ENCODE measurements at regions of chr21 and their contacts with region 1.

Region 1: GRCh38 chr21:45865106-45865832 is 116.3 kb upstream of the COL6A1 start:
- DNase-seq: peak; percentile 87
- H3K4me3 ChIP-seq: peak overlapping the region in 2 of 3 experiments; percentile 1 to 3
- H3K27ac ChIP-seq: no peak overlapping the region
- H3K4me1 ChIP-seq: peaks cover 22% of the 10 kb centered on the region
- H3K27me3 ChIP-seq: no peaks in the 10 kb centered on the region
- CTCF ChIP-seq: no peak

Region 2: GRCh38 chr21:45050786-45051489 is 814.3 kb before region 1 on chr21:
- CTCF ChIA-PET with region 1: no interaction called
- dilution Hi-C with region 1: no loop called
- in situ Hi-C with region 1: no loop called
- intact Hi-C with region 1: no loop called
- DNase-seq: no peak
- H3K4me3 ChIP-seq: no peak overlapping the region
- H3K27ac ChIP-seq: no peak overlapping the region
- H3K4me1 ChIP-seq: no peaks in the 10 kb centered on the region
- H3K27me3 ChIP-seq: peaks cover 8% of the 10 kb centered on the region
- CTCF ChIP-seq: no peak

Region 3: GRCh38 chr21:45854690-45855247 is 10.5 kb before region 1 on chr21:
- CTCF ChIA-PET with region 1: no interaction called
- dilution Hi-C with region 1: no loop called
- in situ Hi-C with region 1: no loop called
- intact Hi-C with region 1: loop called (anchors 1 kb)
- DNase-seq: no peak
- H3K4me3 ChIP-seq: no peak overlapping the region
- H3K27ac ChIP-seq: no peak overlapping the region
- H3K4me1 ChIP-seq: peaks cover 15% of the 10 kb centered on the region
- H3K27me3 ChIP-seq: no peaks in the 10 kb centered on the region
- CTCF ChIP-seq: no peak

Region 4: DNA sequence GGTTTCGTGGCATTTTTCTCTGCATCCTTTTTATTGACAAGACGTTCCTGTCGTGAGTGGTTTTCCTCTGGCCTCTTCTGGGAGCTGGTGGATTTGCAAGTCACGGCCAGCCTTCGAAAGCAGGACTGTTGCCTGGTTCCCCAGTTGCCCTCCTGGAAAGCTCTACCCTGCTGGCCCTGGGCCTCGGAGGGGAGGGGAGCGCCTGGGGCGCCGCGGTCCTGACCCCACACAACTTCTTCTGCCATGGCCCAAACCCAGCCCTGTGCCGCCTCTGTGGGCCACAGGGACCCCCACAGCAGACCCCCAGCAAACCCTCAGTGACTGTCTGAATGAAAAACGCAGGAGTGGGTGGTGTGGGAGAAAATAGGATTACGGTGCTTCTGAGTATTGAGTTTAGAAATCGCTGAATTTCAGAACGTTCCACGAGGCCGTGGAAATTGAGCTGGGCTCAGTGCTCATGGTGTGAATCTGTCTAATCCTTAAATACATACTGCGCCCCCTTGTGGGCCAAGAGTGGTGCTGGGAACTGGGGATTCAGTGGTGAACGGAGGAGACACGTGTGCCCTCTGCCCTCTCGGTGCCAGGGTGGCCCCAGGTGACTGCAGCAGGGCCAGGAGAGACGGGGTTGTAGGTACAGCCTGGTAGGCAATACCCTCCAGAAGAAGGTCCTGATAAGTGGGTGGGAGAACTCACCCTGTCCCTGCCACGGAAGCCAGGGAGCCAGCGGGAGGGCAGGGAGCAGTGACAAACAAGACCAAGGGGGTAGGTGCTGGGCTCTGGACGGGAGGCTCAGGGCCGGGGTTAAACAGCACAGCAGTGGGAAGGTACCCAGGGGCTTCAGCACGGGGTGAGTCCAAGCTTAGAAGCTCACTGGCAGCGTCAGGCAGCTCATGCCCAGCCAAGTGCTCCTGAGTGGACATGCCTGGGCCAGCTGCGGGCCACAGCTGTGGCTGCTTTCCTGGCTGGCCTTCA is 15.1 kb after region 1 on chr21:
- CTCF ChIA-PET with region 1: no interaction called
- dilution Hi-C with region 1: no loop called
- in situ Hi-C with region 1: no loop called
- intact Hi-C with region 1: loop called (anchors 2 kb)
- DNase-seq: peak; percentile 67
- H3K4me3 ChIP-seq: peak overlapping the region in 2 of 3 experiments; percentile 7 to 12
- H3K27ac ChIP-seq: peak overlapping the region; percentile 33
- H3K4me1 ChIP-seq: peaks cover 16% of the 10 kb centered on the region
- H3K27me3 ChIP-seq: no peaks in the 10 kb centered on the region
- CTCF ChIP-seq: peak; percentile 82 to 89

Region 5: GRCh38 chr21:46048926-46049889 is 183.9 kb after region 1 on chr21:
- CTCF ChIA-PET with region 1: no interaction called
- dilution Hi-C with region 1: no loop called
- in situ Hi-C with region 1: no loop called
- intact Hi-C with region 1: no loop called
- DNase-seq: peak; percentile 66
- H3K4me3 ChIP-seq: no peak overlapping the region
- H3K27ac ChIP-seq: peak overlapping the region; percentile 24
- H3K4me1 ChIP-seq: peaks cover 29% of the 10 kb centered on the region
- H3K27me3 ChIP-seq: no peaks in the 10 kb centered on the region
- CTCF ChIP-seq: no peak

Measured in mammary epithelial cell (primary cell).